Panc1 (cell line): ENCODE measurements at regions of chr12 and their contacts with region 1.

Region 1: GRCh38 chr12:121826318-121827150 is 22.7 kb downstream of the SETD1B start:
- DNase-seq: no peak
- ATAC-seq: no peak
- H3K4me3 ChIP-seq: no peak overlapping the region
- H3K27ac ChIP-seq: no peak overlapping the region
- H3K4me1 ChIP-seq: no peaks in the 10 kb centered on the region
- H3K27me3 ChIP-seq: no peaks in the 10 kb centered on the region
- CTCF ChIP-seq: no peak

Region 2: DNA sequence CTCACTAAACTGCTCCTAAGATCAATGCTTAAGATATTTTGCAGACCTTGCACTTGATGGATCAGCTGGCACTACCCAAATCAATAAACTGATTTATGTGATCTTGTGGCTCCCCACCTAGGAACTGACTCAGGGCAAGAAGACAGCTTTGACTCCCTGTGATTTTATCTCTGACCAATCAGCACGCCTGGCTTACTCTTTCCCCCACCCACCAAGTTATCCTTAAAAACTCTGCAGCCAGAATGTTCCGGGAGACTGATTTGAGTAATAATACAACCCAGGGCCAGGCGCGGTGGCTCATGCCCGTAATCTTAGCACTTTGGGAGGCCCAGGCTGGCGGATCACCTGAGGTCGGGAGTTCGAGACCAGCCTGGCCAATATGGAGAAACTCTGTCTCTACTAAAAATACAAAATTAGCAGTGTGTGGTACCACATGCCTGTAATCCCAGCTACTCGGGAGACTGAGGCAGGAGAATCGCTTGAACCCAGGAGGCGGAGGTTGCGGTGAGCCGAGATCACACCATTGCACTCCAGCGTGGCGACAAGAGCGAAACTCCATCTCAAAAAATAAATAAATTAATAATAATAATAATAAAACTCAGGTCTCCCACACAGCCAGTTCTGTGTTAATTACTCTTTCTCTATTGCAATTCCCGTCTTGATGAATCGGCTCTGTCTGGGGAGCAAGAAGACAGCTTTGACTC is 169.1 kb before region 1 on chr12:
- CTCF ChIA-PET with region 1: interaction called, 13 read pairs
- POLR2A ChIA-PET with region 1: no interaction called
- in situ Hi-C with region 1: no loop called
- intact Hi-C with region 1: no loop called
- DNase-seq: no peak
- ATAC-seq: no peak
- H3K4me3 ChIP-seq: no peak overlapping the region
- H3K27ac ChIP-seq: no peak overlapping the region
- H3K4me1 ChIP-seq: no peaks in the 10 kb centered on the region
- H3K27me3 ChIP-seq: no peaks in the 10 kb centered on the region
- CTCF ChIP-seq: no peak

Region 3: GRCh38 chr12:121729021-121729420 is 97.5 kb before region 1 on chr12:
- CTCF ChIA-PET with region 1: no interaction called
- POLR2A ChIA-PET with region 1: no interaction called
- in situ Hi-C with region 1: no loop called
- intact Hi-C with region 1: no loop called
- DNase-seq: no peak
- ATAC-seq: no peak
- H3K4me3 ChIP-seq: no peak overlapping the region
- H3K27ac ChIP-seq: no peak overlapping the region
- H3K4me1 ChIP-seq: no peaks in the 10 kb centered on the region
- H3K27me3 ChIP-seq: no peaks in the 10 kb centered on the region
- CTCF ChIP-seq: no peak